CD4-positive, alpha-beta T cell (primary cell): ENCODE measurements at regions of chr19 and their contacts with region 1.

Region 1: GRCh38 chr19:3762501-3763459 is at the start of gene MRPL54:
- DNase-seq: peak; percentile 98 to 100 (median 99)
- ATAC-seq: peak; percentile 81
- H3K4me3 ChIP-seq: peak within 1 kb of the TSS; percentile 99
- H3K4me3 Mint-ChIP-seq: peak within 1 kb of the TSS; percentile 97
- H3K27ac ChIP-seq: peak within 1 kb of the TSS; percentile 99 to 100
- H3K27ac Mint-ChIP-seq: peak within 1 kb of the TSS; percentile 100
- H3K4me1 ChIP-seq: peaks cover 70% of the 10 kb centered on the region
- H3K4me1 Mint-ChIP-seq: peaks cover 33% of the 10 kb centered on the region
- H3K27me3 ChIP-seq: no peaks in the 10 kb centered on the region
- H3K27me3 Mint-ChIP-seq: no peaks in the 10 kb centered on the region
- CTCF ChIP-seq: no peak
- total RNA-seq, gene MRPL54: 68.9 to 71.1 TPM

Region 2: DNA sequence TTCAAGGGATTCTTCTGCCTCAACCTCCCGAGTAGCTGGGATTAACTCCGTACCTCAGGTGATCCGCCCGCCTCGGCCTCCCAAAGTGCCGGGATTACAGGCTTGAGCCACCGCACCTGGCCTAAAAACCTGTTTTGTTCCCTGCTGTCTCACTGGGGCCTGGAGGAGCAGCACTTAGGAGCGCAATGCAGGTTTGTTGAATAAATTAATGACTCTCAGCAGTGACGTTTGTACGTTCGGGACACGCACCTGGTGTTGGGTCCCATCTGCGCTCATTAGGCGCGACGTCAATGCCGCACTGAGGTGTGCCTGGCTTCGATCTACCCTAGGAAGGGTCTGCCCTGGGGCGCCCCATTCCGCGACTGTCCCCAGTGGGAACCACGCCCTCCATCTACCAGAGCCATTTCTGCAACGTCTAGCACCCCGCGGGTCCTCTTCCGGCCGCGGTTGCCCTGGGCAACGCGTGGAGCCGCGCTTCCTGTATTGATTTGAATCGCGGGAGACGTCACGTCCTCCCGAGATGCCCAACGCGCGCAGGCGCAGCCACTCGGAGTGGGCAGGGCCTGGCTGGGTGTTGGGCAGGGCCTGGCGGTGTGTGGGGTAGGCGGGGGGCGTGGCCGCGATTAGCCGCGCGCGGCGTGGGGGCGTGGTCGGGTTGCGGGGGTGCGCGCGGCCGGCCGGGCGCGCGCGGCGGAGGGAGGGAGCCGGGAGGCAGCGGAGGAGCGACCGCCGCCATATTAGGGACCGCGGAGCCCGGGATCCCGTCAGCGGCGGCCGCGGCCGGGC is 257.0 kb before region 1 on chr19 and contains the start of gene FZR1:
- CTCF ChIA-PET with region 1: no interaction called
- POLR2A ChIA-PET with region 1: no interaction called
- intact Hi-C with region 1: loop called in 1 of 2 experiments (anchors 2 kb)
- DNase-seq: peak; percentile 98 to 100 (median 100)
- ATAC-seq: peak; percentile 85
- H3K4me3 ChIP-seq: peak within 1 kb of the TSS; percentile 91
- H3K4me3 Mint-ChIP-seq: peak within 1 kb of the TSS; percentile 95
- H3K27ac ChIP-seq: peak within 1 kb of the TSS; percentile 85 to 96
- H3K27ac Mint-ChIP-seq: peak within 1 kb of the TSS; percentile 95
- H3K4me1 ChIP-seq: peaks cover 53% of the 10 kb centered on the region
- H3K4me1 Mint-ChIP-seq: peaks cover 48% of the 10 kb centered on the region
- H3K27me3 ChIP-seq: no peaks in the 10 kb centered on the region
- H3K27me3 Mint-ChIP-seq: no peaks in the 10 kb centered on the region
- CTCF ChIP-seq: no peak
- total RNA-seq, gene FZR1: 109 to 116 TPM

Region 3: DNA sequence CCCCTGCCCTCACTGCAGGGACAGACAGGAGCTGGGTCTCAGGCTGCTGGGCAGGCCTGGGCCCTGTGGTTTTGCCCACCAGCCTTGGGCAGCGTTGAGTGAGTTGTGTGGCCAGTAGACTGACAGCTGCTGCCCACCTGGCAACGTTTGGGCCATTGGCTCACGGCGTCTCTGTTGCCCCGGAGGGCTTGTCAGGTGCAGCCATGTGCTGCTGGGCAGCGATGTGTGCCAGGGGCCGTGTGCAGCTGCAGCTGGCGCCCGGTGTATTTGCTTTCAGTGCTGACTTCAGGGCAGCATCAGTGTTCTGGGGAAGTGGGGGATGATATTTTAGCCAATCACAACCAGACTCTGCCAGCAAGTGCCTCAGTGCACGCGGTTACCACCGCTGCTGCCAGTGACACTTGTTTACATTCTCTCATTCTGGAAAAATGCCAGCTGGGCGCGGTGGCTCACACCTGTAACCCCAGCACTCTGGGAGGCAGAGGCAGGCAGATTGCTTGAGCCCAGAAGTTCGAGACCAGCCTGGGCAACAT is 246.0 kb before region 1 on chr19:
- CTCF ChIA-PET with region 1: no interaction called
- POLR2A ChIA-PET with region 1: no interaction called
- intact Hi-C with region 1: no loop called
- DNase-seq: peak in 13 of 14 experiments; percentile 27 to 75 (median 49)
- ATAC-seq: peak; percentile 90
- H3K4me3 ChIP-seq: no peak overlapping the region
- H3K4me3 Mint-ChIP-seq: peak overlapping the region; percentile 23
- H3K27ac ChIP-seq: no peak overlapping the region
- H3K27ac Mint-ChIP-seq: peak overlapping the region; percentile 84
- H3K4me1 ChIP-seq: peaks cover 50% of the 10 kb centered on the region
- H3K4me1 Mint-ChIP-seq: peaks cover 48% of the 10 kb centered on the region
- H3K27me3 ChIP-seq: no peaks in the 10 kb centered on the region
- H3K27me3 Mint-ChIP-seq: no peaks in the 10 kb centered on the region
- CTCF ChIP-seq: no peak

Region 4: GRCh38 chr19:3700221-3701032 is 62.4 kb before region 1 on chr19 and contains the start of gene PIP5K1C:
- CTCF ChIA-PET with region 1: no interaction called
- POLR2A ChIA-PET with region 1: interaction called, 6 read pairs
- intact Hi-C with region 1: loop called in 1 of 2 experiments (anchors 2 kb)
- DNase-seq: peak; percentile 84 to 97 (median 92)
- ATAC-seq: peak; percentile 99
- H3K4me3 ChIP-seq: peak within 1 kb of the TSS; percentile 72
- H3K4me3 Mint-ChIP-seq: peak within 1 kb of the TSS; percentile 91
- H3K27ac ChIP-seq: no peak within 1 kb of the TSS
- H3K27ac Mint-ChIP-seq: peak within 1 kb of the TSS; percentile 73
- H3K4me1 ChIP-seq: peaks cover 37% of the 10 kb centered on the region
- H3K4me1 Mint-ChIP-seq: peaks cover 27% of the 10 kb centered on the region
- H3K27me3 ChIP-seq: peaks cover 0 to 2% of the 10 kb centered on the region in 2 experiments
- H3K27me3 Mint-ChIP-seq: no peaks in the 10 kb centered on the region
- CTCF ChIP-seq: peak; percentile 73
- total RNA-seq, gene PIP5K1C: 14.7 to 15.5 TPM

Region 5: DNA sequence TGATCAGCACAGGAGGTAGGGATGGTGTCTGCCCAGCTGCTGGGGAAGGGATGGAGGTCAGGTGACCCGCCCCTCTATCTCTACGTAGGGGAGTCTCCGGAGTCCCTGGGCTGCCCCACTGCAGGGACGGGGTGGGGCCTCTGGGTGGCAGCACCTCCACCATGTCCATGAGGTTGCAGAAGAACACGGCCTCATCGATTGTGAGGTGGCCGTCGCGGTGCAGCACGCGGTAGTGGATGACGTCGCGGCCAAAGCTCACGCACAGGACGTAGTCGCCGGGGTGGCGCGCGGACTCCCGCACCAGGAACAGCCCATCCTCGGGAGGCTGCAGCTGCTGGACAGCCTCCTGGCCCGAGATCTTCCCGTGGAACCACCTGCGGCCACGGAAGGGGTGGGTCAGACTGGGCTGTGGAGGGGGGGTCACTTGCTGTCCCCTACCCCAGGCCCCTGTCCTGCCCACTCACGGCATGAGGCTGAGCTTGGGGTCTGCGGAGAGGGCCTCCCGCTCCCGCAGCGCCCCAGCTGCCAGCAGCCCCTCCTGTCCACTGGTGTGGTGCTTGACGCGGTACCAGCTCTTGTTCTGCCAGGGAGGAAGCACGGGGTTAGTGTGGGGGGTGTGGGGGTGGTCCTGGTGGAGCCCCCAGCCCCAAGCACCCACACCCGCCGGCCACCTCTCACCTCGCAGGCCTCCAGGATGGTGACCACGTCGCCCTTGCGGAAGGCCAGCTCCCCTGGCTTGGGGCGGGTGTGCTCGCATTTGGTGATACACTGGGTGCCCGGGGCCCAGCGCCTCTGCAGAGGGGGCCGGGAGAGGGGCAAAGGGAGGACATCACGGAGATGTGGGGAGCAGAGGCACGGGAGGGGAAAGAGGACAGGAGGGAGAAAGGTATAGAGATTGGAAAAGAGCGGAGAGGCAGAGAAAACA is 21.1 kb after region 1 on chr19:
- CTCF ChIA-PET with region 1: no interaction called
- POLR2A ChIA-PET with region 1: interaction called, 11 read pairs
- intact Hi-C with region 1: no loop called
- DNase-seq: peak in 7 of 14 experiments; percentile 18 to 67 (median 36)
- ATAC-seq: peak; percentile 68
- H3K4me3 ChIP-seq: no peak overlapping the region
- H3K4me3 Mint-ChIP-seq: peak overlapping the region; percentile 86
- H3K27ac ChIP-seq: no peak overlapping the region
- H3K27ac Mint-ChIP-seq: no peak overlapping the region
- H3K4me1 ChIP-seq: peaks cover 18% of the 10 kb centered on the region
- H3K4me1 Mint-ChIP-seq: peaks cover 8% of the 10 kb centered on the region
- H3K27me3 ChIP-seq: no peaks in the 10 kb centered on the region
- H3K27me3 Mint-ChIP-seq: no peaks in the 10 kb centered on the region
- CTCF ChIP-seq: peak; percentile 12

Region 6: GRCh38 chr19:3821857-3822364 is 59.1 kb after region 1 on chr19:
- CTCF ChIA-PET with region 1: interaction called, 35 read pairs
- POLR2A ChIA-PET with region 1: interaction called, 46 read pairs
- intact Hi-C with region 1: loop called (anchors 1 kb)
- DNase-seq: peak; percentile 70 to 95 (median 89)
- ATAC-seq: peak; percentile 96
- H3K4me3 ChIP-seq: no peak overlapping the region
- H3K4me3 Mint-ChIP-seq: peak overlapping the region; percentile 27
- H3K27ac ChIP-seq: no peak overlapping the region
- H3K27ac Mint-ChIP-seq: no peak overlapping the region
- H3K4me1 ChIP-seq: peaks cover 39% of the 10 kb centered on the region
- H3K4me1 Mint-ChIP-seq: peaks cover 23% of the 10 kb centered on the region
- H3K27me3 ChIP-seq: no peaks in the 10 kb centered on the region
- H3K27me3 Mint-ChIP-seq: no peaks in the 10 kb centered on the region
- CTCF ChIP-seq: peak; percentile 99

Region 7: DNA sequence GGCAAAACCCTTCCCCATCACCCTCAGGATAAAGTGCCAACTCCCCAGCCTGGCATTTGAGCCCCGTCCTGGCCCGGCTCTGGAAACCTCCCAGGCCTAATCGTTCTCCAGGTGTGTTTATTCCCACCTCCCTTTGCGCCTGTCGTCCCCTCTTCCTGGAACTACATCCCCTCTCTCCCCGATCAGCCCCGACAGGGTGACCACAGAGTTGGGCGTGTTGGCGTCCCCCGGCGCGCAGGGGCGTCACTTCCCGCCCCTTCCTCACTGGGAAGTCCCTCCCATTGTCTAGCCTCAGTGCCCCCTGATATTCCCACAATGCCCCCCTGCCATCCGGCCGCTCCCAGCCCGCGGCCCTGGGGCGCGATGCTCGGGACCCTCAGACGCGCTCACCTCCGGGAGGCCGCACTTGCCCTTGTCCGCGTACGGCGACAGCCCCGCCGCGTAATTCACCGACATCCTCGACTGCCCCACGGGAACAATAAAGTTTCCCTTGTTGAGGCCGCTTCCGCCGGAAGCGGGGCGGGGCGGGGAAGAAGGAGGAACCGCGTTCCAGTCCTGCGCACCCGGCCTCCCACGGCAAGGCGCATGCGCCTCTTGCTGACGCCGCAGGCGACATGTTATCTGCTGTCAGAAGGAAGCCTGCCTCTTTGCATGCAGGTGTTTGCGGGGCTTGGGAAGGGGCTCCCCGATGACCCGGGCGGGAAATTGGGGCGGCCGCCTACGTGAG is 419.5 kb after region 1 on chr19 and contains the starts of genes ANKRD24 and SIRT6:
- CTCF ChIA-PET with region 1: no interaction called
- POLR2A ChIA-PET with region 1: no interaction called
- intact Hi-C with region 1: loop called in 1 of 2 experiments (anchors 1 kb)
- DNase-seq: peak; percentile 90 to 98 (median 96)
- ATAC-seq: peak; percentile 80
- H3K4me3 ChIP-seq: peak within 1 kb of the TSS; percentile 96
- H3K4me3 Mint-ChIP-seq: peak within 1 kb of the TSS; percentile 99
- H3K27ac ChIP-seq: peak within 1 kb of the TSS; percentile 66 to 80
- H3K27ac Mint-ChIP-seq: peak within 1 kb of the TSS; percentile 96
- H3K4me1 ChIP-seq: peaks cover 47% of the 10 kb centered on the region
- H3K4me1 Mint-ChIP-seq: peaks cover 32% of the 10 kb centered on the region
- H3K27me3 ChIP-seq: no peaks in the 10 kb centered on the region
- H3K27me3 Mint-ChIP-seq: peaks cover 3% of the 10 kb centered on the region
- CTCF ChIP-seq: no peak
- total RNA-seq, gene ANKRD24: 0.59 to 0.60 TPM
- total RNA-seq, gene SIRT6: 11.2 to 14.2 TPM